IMR-90 (cell line): ENCODE measurements at regions of chr10 and their contacts with region 1.

Region 1: DNA sequence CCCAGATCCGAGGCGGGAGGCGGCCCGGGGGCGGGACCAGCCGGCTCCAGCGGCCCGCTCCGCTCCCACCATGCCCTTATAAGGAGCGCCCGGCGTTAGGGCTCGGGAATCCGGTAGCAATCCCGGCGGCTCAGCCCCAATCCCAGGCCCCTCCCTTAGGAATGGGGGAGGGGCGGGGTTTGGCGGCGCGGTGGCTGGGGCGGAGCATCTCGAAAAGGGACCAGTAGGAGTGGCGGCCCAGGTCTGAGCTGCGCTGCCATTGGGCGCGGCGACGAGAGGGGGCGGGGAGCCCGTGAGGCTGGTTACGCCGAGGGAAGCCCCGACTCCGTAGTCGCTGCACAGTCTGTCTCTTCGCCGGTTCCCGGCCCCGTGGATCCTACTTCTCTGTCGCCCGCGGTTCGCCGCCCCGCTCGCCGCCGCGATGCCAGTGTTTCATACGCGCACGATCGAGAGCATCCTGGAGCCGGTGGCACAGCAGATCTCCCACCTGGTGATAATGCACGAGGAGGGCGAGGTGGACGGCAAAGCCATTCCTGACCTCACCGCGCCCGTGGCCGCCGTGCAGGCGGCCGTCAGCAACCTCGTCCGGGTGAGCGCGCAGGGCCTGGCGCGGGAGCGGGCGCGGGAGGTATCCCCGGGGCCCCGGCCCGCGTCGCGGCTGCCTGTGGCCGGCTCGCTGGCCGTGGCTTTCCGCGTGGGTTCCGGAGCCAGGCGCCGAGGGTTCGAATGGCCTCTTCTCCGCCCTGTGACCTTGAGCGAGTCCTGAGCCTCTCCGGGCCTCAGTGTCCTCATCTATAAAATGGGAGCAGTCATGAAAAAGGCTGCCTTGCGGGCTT is at the start of gene VCL:
- DNase-seq: peak; percentile 97
- ATAC-seq: peak; percentile 91
- H3K4me3 ChIP-seq: peak within 1 kb of the TSS; percentile 92
- H3K27ac ChIP-seq: peak within 1 kb of the TSS; percentile 99
- H3K4me1 ChIP-seq: peaks cover 9% of the 10 kb centered on the region
- H3K27me3 ChIP-seq: no peaks in the 10 kb centered on the region
- CTCF ChIP-seq: no peak
- POLR2A ChIP-seq: peak; percentile 99
- RAD21 ChIP-seq: 0 out of 2 replicates have a peak, but pooled peaks have one; percentile 12
- total RNA-seq, gene VCL: 283 and 316 TPM in 2 replicates

Region 2: DNA sequence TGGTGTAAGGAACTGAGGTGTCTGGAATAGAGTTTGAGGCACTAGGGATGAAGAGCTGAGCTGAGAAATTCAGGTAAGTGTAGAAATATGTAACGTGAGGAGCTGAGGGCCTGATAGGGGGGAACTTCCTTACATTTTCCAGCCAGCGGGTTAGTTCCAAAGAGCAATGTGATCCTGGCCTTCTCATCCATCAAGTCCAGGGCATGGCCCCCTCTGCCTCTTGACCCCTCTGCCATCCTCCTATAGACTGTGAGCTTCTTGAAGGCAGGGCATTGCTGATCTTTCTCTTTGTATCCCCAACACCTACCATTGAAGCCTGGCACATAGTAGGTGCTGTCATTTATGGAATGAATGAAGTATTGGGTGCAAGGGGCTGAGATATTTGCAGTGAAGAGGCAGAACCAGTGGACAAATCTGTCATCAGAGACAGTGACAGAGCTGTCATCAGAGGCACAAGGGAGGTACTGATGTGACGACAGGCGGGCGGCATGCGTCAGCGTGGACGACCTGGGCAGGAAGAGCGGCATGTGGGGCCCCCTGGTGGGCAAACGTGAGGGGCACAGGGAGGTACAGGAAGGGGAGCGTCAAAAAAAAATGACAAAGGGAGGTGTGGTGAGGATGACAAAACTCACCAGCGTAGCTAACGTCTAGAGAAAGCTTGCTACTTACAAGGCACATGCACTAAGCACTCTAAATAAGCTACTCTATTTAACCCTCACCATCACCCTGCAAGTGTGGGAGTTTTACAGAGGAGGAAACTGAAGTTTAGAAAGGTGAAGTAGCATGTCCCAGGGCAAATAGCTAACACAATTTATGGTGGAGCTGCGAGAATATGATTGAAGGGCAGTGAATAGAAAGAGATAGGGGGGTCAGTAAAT is 118.5 kb before region 1 on chr10:
- CTCF ChIA-PET with region 1: interaction called, 14 read pairs
- POLR2A ChIA-PET with region 1: no interaction called
- dilution Hi-C with region 1: no loop called
- in situ Hi-C with region 1: no loop called
- intact Hi-C with region 1: no loop called
- DNase-seq: peak; percentile 75
- ATAC-seq: peak; percentile 75
- H3K4me3 ChIP-seq: no peak overlapping the region
- H3K27ac ChIP-seq: no peak overlapping the region
- H3K4me1 ChIP-seq: peaks cover 2% of the 10 kb centered on the region; the same call in 1 of the 2 replicates
- H3K27me3 ChIP-seq: no peaks in the 10 kb centered on the region
- CTCF ChIP-seq: peak; percentile 91
- POLR2A ChIP-seq: no peak
- RAD21 ChIP-seq: peak; percentile 81

Region 3: DNA sequence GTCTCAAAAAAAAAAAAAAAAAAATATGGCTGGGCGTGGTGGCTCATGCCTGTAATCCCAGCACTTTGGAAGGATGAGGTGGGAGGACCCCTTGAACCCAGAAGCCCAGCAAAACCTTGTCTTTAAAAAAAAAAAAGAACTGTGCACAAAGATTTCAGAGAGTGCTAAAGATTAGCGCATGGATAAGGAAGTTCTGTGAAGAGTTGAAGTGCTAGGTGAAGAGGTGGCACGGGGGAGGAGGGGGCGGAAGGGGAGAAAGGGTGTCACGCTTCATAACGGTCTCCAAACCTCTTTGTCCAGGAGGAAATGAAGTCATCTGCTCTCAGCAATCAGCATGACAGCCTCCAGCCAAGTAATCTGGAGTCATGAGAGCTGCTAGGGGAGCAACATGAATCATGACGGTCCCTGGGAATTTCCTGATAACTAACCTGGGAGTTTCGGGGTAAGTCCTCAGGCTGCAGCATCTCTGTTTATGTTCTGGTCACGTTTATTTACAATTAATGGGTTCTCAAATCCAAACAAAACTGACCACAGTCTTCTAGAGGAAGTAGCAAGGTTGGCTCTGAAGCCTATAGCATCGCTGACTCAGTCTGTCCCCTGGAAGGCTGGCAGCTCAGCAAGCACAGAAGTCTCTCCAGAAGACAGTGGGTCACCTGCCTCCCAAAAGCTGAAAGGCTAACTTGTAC is 89.0 kb before region 1 on chr10:
- CTCF ChIA-PET with region 1: interaction called, 3 read pairs
- POLR2A ChIA-PET with region 1: interaction called, 5 read pairs
- dilution Hi-C with region 1: no loop called
- in situ Hi-C with region 1: no loop called
- intact Hi-C with region 1: loop called (anchors 5 kb)
- DNase-seq: peak; percentile 100
- ATAC-seq: peak; percentile 24
- H3K4me3 ChIP-seq: no peak overlapping the region
- H3K27ac ChIP-seq: peak overlapping the region; percentile 91
- H3K4me1 ChIP-seq: peaks cover 38% of the 10 kb centered on the region
- H3K27me3 ChIP-seq: no peaks in the 10 kb centered on the region
- CTCF ChIP-seq: no peak
- POLR2A ChIP-seq: peak; percentile 85
- RAD21 ChIP-seq: peak; percentile 26

Region 4: GRCh38 chr10:73983096-73984047 is 14.6 kb before region 1 on chr10:
- CTCF ChIA-PET with region 1: no interaction called
- POLR2A ChIA-PET with region 1: interaction called, 10 read pairs
- dilution Hi-C with region 1: no loop called
- in situ Hi-C with region 1: no loop called
- intact Hi-C with region 1: no loop called
- DNase-seq: no peak
- ATAC-seq: no peak
- H3K4me3 ChIP-seq: no peak overlapping the region
- H3K27ac ChIP-seq: no peak overlapping the region
- H3K4me1 ChIP-seq: no peaks in the 10 kb centered on the region
- H3K27me3 ChIP-seq: no peaks in the 10 kb centered on the region
- CTCF ChIP-seq: no peak
- POLR2A ChIP-seq: no peak
- RAD21 ChIP-seq: no peak

Region 5: GRCh38 chr10:74063256-74063655 is 65.3 kb after region 1 on chr10:
- CTCF ChIA-PET with region 1: no interaction called
- POLR2A ChIA-PET with region 1: no interaction called
- dilution Hi-C with region 1: no loop called
- in situ Hi-C with region 1: no loop called
- intact Hi-C with region 1: no loop called
- DNase-seq: peak; percentile 53
- ATAC-seq: no peak
- H3K4me3 ChIP-seq: no peak overlapping the region
- H3K27ac ChIP-seq: no peak overlapping the region
- H3K4me1 ChIP-seq: peaks cover 6% of the 10 kb centered on the region
- H3K27me3 ChIP-seq: no peaks in the 10 kb centered on the region
- CTCF ChIP-seq: no peak
- POLR2A ChIP-seq: no peak
- RAD21 ChIP-seq: no peak

Region 6: DNA sequence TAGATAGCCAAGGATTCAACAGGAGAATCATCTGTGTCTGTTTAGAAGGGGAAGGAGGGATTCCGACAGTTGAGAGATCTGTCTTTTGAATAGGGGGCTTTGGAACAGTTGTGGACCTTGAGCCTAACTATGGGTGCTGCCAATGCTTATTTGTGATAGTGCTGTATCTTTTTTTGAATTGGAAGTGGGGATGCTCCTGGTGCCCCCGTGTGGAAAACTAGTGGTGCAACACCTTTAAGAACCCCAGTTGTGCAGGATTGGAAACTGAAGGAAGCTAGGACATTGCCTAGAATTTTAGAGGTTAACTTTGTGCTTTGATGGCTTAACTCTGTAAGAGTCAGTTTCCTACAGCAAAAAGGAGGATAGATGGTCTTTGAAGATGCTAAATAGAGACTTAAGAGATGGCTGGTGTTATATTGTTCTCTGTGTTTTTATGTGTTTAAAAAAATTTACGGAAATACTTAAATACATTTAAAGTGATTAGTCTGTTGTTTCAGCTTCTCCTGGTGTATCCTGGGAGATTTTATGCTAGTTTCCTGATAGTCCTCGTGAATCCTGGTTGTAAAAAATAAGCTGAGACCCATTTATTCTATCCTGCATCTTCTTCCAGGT is 83.3 kb after region 1 on chr10:
- CTCF ChIA-PET with region 1: no interaction called
- POLR2A ChIA-PET with region 1: no interaction called
- dilution Hi-C with region 1: no loop called
- in situ Hi-C with region 1: no loop called
- intact Hi-C with region 1: loop called (anchors 2 kb)
- DNase-seq: peak; percentile 57
- ATAC-seq: peak; percentile 63
- H3K4me3 ChIP-seq: no peak overlapping the region
- H3K27ac ChIP-seq: no peak overlapping the region
- H3K4me1 ChIP-seq: peaks cover 7% of the 10 kb centered on the region
- H3K27me3 ChIP-seq: no peaks in the 10 kb centered on the region
- CTCF ChIP-seq: peak; percentile 69
- POLR2A ChIP-seq: no peak
- RAD21 ChIP-seq: peak; percentile 75

Region 7: DNA sequence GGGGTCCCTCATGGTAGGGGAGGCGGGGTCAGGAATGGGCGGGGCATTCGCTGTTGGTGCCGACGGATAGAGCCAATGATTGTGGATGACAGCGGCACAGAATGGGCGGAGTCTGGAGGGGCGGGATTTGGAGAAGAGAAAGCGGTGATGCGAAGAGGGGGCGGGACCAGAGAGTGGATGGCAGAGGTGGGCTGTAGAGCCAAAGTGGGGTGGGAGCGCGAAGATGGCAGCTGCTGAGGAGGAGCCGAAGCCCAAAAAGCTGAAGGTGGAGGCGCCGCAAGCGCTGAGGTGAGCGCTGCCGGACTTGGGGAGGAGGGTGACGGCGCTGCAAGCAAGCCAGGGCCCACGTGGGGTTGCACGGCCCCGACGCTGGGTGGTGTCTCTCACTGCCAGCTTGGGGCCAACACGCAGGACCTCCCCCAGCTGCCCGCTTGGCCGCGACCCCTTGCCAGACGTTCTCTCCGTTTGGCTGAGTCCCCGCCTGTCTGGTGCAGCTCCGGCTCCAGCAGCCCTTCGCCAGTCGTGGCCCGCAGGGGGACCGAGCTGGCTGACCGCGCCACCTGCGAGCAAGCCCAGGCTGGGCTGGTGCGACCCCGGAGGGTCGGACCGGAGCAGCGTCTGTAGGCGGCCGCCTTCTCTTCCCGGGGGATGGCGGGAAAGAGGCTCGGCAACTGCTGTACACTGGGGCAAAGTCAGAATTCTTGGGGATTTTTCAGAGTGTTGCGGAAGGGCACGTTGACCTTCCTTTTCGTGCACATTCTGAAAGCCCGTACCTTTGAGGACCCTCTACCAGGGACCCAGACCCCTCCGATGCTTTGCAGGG is 153.3 kb after region 1 on chr10 and contains the start of gene ADK:
- CTCF ChIA-PET with region 1: no interaction called
- POLR2A ChIA-PET with region 1: no interaction called
- dilution Hi-C with region 1: no loop called
- in situ Hi-C with region 1: no loop called
- intact Hi-C with region 1: no loop called
- DNase-seq: peak; percentile 96
- ATAC-seq: peak; percentile 98
- H3K4me3 ChIP-seq: peak within 1 kb of the TSS; percentile 74
- H3K27ac ChIP-seq: peak within 1 kb of the TSS; percentile 71
- H3K4me1 ChIP-seq: no peaks in the 10 kb centered on the region; the same call in 1 of the 2 replicates
- H3K27me3 ChIP-seq: no peaks in the 10 kb centered on the region
- CTCF ChIP-seq: 0 out of 2 replicates have a peak, but pooled peaks have one; percentile 17
- POLR2A ChIP-seq: 0 out of 2 replicates have a peak, but pooled peaks have one; percentile 26
- RAD21 ChIP-seq: peak; percentile 18; the same call in 1 of the 2 replicates
- total RNA-seq, gene ADK: 40.9 and 50.8 TPM in 2 replicates